Activated naive CD4-positive, alpha-beta T cell treated with anti-CD3 and anti-CD28 coated beads for 36 hours (primary cell): ENCODE measurements at regions of chr2 and their contacts with region 1.

Region 1: DNA sequence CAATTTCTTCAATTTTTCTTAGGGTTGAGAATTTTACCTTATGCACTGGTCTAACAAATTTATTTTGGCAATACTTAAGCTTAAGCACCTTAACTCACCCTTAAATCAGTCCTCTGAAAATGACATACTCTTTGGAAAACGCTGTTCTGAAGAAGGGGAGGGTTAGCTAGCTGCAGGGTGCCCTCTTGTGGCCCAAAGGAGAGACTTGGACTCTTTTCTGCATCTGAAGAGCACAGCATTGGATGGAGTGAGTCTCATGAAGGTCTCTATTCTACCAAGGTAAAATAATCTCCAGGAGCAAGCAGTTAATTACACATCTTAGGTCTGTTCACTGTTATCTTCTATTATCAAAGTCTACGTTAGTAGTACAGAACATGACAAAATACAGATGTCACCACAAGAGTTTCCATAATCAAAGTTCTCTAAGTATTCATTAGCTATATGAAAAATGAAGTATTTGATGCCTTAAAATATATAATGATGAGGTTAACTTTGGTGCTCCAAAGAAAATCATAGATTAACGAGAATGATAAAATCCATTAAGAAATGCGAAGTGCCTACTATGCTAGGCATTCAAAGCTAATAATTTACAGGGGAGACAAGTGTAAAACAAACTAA is 24.4 kb downstream of the PUM2 start:
- DNase-seq: peak; percentile 70
- H3K4me3 Mint-ChIP-seq: no peak overlapping the region
- H3K27ac Mint-ChIP-seq: no peak overlapping the region
- H3K4me1 Mint-ChIP-seq: peaks cover 70% of the 10 kb centered on the region
- H3K27me3 Mint-ChIP-seq: no peaks in the 10 kb centered on the region

Region 2: DNA sequence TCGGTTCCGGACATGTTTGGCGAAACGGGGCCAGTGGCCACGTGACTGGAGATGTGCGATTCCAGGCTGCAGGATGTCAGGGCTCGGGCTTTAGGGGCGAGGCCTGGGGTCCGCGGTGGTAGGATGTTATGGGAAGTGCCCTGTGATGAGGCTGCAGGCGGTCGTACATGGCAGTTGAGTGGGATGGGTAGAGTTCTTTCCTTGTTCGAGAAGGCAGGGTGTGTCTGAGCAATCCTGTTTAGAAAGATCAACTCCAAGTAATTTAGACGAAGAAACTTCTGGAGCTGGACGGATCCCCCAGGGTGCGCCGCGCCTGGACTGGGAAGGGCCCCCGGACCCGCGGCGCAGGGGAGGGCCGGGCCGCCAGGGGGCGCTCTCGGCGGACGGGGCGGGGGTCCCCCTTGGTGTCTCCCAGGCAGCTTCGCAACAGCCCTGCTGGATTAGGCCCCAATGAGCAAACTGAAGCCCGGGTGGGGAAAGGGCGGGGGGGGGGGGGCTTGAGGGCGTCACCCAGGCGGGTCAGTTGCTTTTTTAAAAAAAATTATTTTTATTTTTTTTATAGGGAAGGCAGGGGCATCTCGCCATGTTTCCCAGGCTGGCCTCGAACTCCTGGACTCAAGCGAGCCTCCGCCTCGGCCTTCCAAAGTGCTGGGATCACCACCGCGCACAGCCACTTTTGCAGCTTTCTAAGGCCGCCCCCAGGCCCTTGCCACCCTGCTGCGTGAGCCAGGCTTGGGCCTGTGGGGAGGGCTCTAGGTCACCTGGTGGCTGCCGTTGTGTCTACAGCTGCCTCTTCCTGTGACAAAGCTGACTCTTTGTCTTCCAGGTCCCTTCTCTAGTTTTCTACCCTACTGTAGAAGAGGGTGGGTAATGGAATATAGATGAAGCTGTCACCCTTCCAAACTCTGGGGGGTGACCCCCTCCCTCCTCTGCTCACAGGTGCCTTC is 83.9 kb before region 1 on chr2:
- CTCF ChIA-PET with region 1: interaction called, 3 read pairs
- intact Hi-C with region 1: loop called (anchors 1 kb)
- DNase-seq: peak; percentile 50
- H3K4me3 Mint-ChIP-seq: peak overlapping the region; percentile 50
- H3K27ac Mint-ChIP-seq: no peak overlapping the region
- H3K4me1 Mint-ChIP-seq: peaks cover 7% of the 10 kb centered on the region
- H3K27me3 Mint-ChIP-seq: no peaks in the 10 kb centered on the region

Region 3: DNA sequence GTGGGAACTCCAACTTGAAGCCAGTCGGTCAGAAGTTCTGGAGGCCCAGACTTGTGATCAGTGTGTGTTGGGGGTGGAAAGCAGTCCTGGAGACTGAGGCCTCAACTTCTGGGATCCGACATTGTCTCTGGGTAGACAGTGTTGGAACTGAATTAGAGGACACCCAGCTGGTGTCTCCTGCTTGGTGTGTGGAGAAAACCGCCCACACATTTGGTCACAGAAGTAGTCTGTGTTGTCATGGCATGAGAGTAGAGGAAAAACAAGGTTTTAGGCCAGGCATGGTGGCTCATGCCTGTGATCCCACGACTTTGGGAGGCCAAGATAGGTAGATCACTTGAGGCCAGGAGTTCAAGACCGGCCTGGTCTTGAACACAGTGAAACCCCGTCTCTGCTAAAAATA is 27.2 kb before region 1 on chr2:
- CTCF ChIA-PET with region 1: interaction called, 18 read pairs
- intact Hi-C with region 1: no loop called
- DNase-seq: no peak
- H3K4me3 Mint-ChIP-seq: no peak overlapping the region
- H3K27ac Mint-ChIP-seq: peak overlapping the region; percentile 18
- H3K4me1 Mint-ChIP-seq: peaks cover 14% of the 10 kb centered on the region
- H3K27me3 Mint-ChIP-seq: no peaks in the 10 kb centered on the region

Region 4: DNA sequence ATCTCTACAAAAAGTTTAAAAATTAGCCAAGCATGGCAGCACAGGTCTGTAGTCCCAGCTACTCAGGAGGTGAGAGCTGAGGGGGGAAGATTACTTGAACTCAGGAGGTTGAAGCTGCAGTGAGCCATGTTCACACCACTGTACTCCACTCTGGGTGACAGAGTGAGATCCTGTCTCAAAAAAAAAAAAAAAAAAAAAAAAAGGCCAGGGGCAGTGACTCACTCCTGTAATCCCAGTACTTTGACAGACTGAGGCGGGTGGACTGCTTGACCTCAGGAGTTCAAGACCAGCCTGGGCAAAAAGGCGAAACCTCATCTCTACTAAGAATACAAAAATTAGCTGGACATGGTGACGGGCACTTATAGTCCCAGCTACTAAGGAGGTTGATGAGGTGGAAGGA is 12.6 kb before region 1 on chr2:
- CTCF ChIA-PET with region 1: interaction called, 13 read pairs
- intact Hi-C with region 1: no loop called
- DNase-seq: peak; percentile 9
- H3K4me3 Mint-ChIP-seq: no peak overlapping the region
- H3K27ac Mint-ChIP-seq: no peak overlapping the region
- H3K4me1 Mint-ChIP-seq: peaks cover 26% of the 10 kb centered on the region
- H3K27me3 Mint-ChIP-seq: no peaks in the 10 kb centered on the region

Region 5: DNA sequence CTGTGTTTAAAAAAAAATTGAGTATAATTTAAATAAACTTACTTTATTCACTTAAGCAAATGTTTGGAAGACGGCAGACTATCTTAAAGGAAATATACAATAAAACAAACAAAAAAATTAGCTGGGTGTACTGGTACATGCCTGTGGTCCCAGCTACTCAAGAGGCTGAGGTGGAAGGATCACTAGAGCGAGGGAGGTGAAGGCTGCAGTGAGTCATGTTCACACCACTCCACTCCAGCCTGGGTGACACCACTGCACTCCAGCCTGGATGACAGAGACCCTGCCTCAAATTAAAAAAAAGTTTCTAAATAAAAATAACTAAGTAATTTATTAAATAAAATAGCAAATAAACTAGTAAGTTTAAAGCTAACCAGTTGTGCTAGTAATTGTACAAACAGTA is 16.9 kb after region 1 on chr2:
- CTCF ChIA-PET with region 1: interaction called, 36 read pairs
- intact Hi-C with region 1: loop called (anchors 2 kb)
- DNase-seq: no peak
- H3K4me3 Mint-ChIP-seq: no peak overlapping the region
- H3K27ac Mint-ChIP-seq: no peak overlapping the region
- H3K4me1 Mint-ChIP-seq: peaks cover 80% of the 10 kb centered on the region
- H3K27me3 Mint-ChIP-seq: no peaks in the 10 kb centered on the region

Region 6: GRCh38 chr2:20361893-20362292 is 35.6 kb after region 1 on chr2:
- CTCF ChIA-PET with region 1: no interaction called
- intact Hi-C with region 1: no loop called
- DNase-seq: no peak
- H3K4me3 Mint-ChIP-seq: no peak overlapping the region
- H3K27ac Mint-ChIP-seq: no peak overlapping the region
- H3K4me1 Mint-ChIP-seq: peaks cover 23% of the 10 kb centered on the region
- H3K27me3 Mint-ChIP-seq: peaks cover 1% of the 10 kb centered on the region

Region 7: GRCh38 chr2:20381444-20381843 is 55.2 kb after region 1 on chr2:
- CTCF ChIA-PET with region 1: interaction called, 3 read pairs
- intact Hi-C with region 1: loop called (anchors 5 kb)
- DNase-seq: no peak
- H3K4me3 Mint-ChIP-seq: no peak overlapping the region
- H3K27ac Mint-ChIP-seq: no peak overlapping the region
- H3K4me1 Mint-ChIP-seq: no peaks in the 10 kb centered on the region
- H3K27me3 Mint-ChIP-seq: peaks cover 4% of the 10 kb centered on the region